Tibial artery (tissue), 4 donors: ENCODE measurements at regions of chr6 and their contacts with region 1.

Region 1: DNA sequence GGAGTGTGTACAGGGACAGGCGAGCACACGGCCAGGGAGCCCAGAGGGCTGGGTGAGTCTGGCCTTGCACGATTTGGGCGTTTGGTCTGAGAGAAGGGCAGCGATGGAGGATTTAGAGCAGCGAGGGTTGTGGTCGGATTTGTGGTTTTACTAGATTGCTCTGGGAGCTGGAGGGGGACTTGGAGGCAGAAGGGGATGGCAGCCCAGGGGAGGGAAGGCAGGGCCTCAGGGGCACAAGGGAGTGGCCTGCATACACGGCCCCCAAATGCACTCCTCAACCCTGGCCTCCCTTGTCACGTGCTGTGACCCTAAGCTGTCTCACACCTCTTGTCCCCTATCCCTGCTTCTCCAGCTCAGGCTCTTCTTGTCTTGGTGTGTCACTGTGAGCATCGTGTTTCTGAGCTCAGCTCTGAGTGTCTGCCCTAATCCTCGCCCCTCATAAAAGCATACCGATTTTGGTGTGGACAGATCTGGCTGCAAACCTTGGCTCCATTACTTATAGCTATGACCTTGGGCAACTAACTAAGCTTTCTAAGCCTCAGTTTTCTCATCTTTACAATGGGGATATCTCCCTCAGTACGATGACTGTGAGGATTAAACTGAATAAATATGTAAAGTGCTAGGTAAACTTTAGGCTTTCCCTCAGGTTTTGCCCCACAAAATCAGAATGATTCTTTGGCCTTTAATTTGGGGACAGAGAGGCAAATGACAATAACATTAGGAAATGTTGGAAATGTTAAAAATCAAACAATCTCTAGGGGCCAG is 120.1 kb upstream of the ARMC2 start:
- DNase-seq: no peak
- H3K4me3 ChIP-seq: no peak overlapping the region
- H3K27ac ChIP-seq: no peak overlapping the region
- H3K4me1 ChIP-seq: peaks cover 0 to 15% (median 6%) of the 10 kb centered on the region in 4 donors
- H3K27me3 ChIP-seq: no peaks in the 10 kb centered on the region
- CTCF ChIP-seq: no peak

Region 2: GRCh38 chr6:108782179-108783041 is 54.3 kb after region 1 on chr6:
- intact Hi-C with region 1: loop called (anchors 2 kb)
- DNase-seq: peak; percentile 80 to 89
- H3K4me3 ChIP-seq: peak overlapping the region; percentile 49
- H3K27ac ChIP-seq: peak overlapping the region; percentile 5 to 57
- H3K4me1 ChIP-seq: peaks cover 0 to 15% (median 8%) of the 10 kb centered on the region in 4 donors
- H3K27me3 ChIP-seq: no peaks in the 10 kb centered on the region
- CTCF ChIP-seq: peak; percentile 75 to 79

Region 3: DNA sequence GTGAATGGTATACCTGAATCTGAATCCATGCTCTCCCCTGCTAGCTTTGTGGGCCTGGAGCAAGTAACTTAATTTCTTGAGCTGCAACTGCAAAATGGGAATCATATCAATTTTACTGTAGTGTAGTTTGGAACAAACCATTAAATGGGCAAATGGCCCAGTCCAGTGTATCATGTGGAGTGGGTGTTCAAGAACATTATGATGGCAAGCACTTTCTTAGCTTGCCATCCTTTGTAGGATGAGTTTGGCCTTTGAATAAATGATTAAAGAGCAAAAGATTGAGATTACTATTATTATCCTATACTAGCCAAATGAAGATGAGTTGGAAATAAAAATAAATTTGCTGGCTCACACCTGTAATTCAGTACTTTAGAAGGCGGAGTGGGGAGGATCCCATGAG is 246.1 kb after region 1 on chr6:
- intact Hi-C with region 1: no loop called
- DNase-seq: no peak
- H3K4me3 ChIP-seq: no peak overlapping the region
- H3K27ac ChIP-seq: no peak overlapping the region
- H3K4me1 ChIP-seq: peaks cover 0 to 5% (median 0%) of the 10 kb centered on the region in 4 donors
- H3K27me3 ChIP-seq: no peaks in the 10 kb centered on the region
- CTCF ChIP-seq: no peak